Tibial artery (tissue), 4 donors: ENCODE measurements at regions of chr3 and their contacts with region 1.

Region 1: DNA sequence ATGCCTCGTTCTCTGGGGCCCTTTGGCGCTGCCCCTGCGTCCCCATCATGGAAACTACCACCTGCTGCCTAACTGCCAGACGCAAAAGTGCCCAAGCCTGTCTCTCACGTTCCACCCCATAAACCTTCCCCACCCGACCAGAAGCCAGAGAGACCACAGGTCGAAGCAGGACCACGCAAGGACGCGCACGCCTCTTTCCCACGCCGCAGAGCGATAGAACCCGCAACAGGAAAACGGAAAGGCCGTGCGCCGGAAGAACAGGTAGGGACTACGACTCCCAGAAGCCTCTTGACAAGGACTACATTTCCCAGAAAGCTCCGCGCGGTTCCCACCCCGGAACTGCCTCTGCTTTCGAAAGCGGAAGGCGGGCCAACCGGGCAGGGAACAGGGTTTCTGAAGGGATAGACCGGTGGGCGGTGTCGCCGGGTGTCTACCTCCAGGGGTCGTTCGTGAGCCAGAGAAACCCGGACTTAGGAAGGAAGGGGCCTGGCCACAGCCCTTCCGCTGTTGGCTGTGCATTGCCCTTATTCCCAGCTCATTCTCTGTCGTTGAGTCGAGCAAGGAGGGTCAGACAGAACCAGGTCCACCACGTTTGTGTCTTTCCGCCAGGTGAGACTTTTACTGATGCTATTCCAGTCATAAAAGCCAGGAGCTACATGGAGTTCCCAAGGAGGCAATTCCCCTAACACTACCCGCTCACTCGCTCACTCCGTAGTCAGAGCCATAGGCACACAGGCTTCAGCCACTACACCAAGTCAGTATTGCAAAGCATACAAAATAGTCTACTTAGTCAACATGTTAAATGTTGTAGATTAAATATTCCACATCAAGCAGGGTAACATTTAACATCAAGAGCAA is 56.6 kb upstream of the ZBTB38 start:
- DNase-seq: peak; percentile 98 to 99
- H3K4me3 ChIP-seq: peak overlapping the region; percentile 66 to 67
- H3K27ac ChIP-seq: peak overlapping the region; percentile 76 to 79
- H3K4me1 ChIP-seq: peaks cover 0 to 17% (median 9%) of the 10 kb centered on the region in 4 donors
- H3K27me3 ChIP-seq: no peaks in the 10 kb centered on the region
- CTCF ChIP-seq: peak; percentile 75 to 80

Region 2: DNA sequence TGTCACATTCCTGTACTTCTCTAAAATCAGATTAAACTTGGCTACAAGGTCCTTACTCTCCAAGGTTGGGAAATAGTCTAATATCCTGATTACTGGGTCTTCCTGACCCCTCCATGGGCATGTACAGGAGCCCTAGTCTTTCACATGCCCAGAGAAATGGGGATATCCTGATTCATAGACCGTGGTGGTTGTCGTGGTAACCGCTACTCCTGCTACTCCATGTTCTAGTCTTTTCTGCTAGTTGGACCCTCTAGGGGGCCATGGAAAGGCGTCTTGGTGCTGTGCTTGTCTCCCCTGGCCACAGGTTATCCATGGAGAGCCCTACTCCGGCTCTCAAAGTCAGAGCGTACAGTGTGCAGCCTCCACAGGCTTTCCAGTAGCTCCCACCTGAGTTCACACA is 43.5 kb after region 1 on chr3:
- intact Hi-C with region 1: loop called (anchors 5 kb)
- DNase-seq: no peak
- H3K4me3 ChIP-seq: no peak overlapping the region
- H3K27ac ChIP-seq: no peak overlapping the region
- H3K4me1 ChIP-seq: no peaks in the 10 kb centered on the region
- H3K27me3 ChIP-seq: no peaks in the 10 kb centered on the region
- CTCF ChIP-seq: no peak